ENCODE measurements at regions of chr1 and their contacts with region 1.

Region 1: DNA sequence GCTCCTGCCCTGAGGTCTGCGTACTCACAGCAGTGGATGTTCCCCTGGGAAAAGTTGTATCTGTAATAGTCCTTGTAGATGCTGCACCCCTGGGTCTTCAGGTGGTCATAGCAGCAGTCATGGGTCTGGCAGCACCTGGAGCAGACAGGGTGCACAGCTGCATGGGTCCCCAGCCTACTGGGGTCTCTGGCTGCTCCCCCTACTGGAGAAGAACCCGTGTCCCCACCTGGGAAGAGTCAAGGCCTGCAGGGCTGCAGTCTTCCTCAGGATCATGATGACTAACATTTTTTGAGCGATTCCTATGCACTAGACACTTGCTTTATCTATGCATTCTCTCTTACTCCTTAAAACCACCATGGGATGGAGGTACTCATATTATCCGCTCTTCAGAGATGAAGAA is 3.9 kb downstream of the PLA2G2D start:
- DNase-seq: no peak
- H3K4me3 ChIP-seq: no peak overlapping the region
- H3K27ac ChIP-seq: no peak overlapping the region
- H3K4me1 ChIP-seq: peaks cover 9% of the 10 kb centered on the region
- H3K27me3 ChIP-seq: no peaks in the 10 kb centered on the region
- CTCF ChIP-seq: no peak
- POLR2A ChIP-seq: no peak

Region 2: DNA sequence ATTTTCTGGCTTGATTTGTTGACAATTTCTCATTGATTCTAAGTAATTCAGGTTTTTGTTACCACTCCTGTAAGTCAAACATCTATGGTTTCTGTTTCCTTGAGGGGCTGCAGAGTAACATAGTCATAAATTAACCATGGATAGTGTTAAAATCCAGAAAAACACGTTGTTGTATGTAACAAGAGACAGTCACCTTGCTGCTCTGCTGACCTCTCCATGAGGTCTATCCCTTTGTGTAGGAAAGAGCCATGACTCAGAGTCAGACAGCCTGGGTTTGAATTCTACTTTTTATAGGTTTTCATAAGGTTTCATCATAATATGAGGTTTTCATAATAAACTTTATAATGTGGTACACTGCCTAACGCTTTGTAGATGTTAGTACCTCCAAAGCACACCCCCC is 499.0 kb before region 1 on chr1:
- CTCF ChIA-PET with region 1: no interaction called
- POLR2A ChIA-PET with region 1: no interaction called
- dilution Hi-C with region 1: no loop called
- intact Hi-C with region 1: no loop called
- DNase-seq: no peak
- H3K4me3 ChIP-seq: no peak overlapping the region
- H3K27ac ChIP-seq: no peak overlapping the region
- H3K4me1 ChIP-seq: no peaks in the 10 kb centered on the region
- H3K27me3 ChIP-seq: no peaks in the 10 kb centered on the region
- CTCF ChIP-seq: no peak
- POLR2A ChIP-seq: no peak

Region 3: GRCh38 chr1:20058531-20058930 is 56.9 kb before region 1 on chr1:
- CTCF ChIA-PET with region 1: no interaction called
- POLR2A ChIA-PET with region 1: interaction called, 10 read pairs
- dilution Hi-C with region 1: no loop called
- intact Hi-C with region 1: no loop called
- DNase-seq: no peak
- H3K4me3 ChIP-seq: no peak overlapping the region
- H3K27ac ChIP-seq: no peak overlapping the region
- H3K4me1 ChIP-seq: no peaks in the 10 kb centered on the region
- H3K27me3 ChIP-seq: peaks cover 2 to 9% of the 10 kb centered on the region in 2 experiments
- CTCF ChIP-seq: no peak
- POLR2A ChIP-seq: no peak

Region 4: DNA sequence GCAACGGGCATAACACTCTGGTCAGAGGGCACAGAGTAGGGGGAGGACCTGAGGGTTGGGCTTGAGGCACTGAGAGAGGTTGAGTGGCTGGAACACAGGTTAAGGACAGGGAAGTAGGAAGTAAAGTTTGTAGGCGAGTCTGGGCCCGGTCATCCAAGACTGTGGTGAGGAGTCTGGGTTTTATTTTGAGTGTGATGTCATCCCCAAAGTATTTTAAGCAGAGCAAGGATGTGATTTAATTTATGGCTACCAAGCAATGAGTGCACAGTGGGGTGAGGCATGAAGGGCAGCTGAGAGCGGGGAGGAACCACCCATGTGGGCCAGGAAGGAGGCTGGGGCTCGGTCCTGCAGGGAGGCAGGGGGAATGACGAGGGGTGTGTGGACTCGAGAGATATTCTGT is 164.0 kb after region 1 on chr1:
- CTCF ChIA-PET with region 1: no interaction called
- POLR2A ChIA-PET with region 1: no interaction called
- dilution Hi-C with region 1: no loop called
- intact Hi-C with region 1: no loop called
- DNase-seq: no peak
- H3K4me3 ChIP-seq: no peak overlapping the region
- H3K27ac ChIP-seq: no peak overlapping the region
- H3K4me1 ChIP-seq: no peaks in the 10 kb centered on the region
- H3K27me3 ChIP-seq: no peaks in the 10 kb centered on the region
- CTCF ChIP-seq: no peak
- POLR2A ChIP-seq: no peak